ENCODE measurements at regions of chr19 and their contacts with region 1.

Region 1: DNA sequence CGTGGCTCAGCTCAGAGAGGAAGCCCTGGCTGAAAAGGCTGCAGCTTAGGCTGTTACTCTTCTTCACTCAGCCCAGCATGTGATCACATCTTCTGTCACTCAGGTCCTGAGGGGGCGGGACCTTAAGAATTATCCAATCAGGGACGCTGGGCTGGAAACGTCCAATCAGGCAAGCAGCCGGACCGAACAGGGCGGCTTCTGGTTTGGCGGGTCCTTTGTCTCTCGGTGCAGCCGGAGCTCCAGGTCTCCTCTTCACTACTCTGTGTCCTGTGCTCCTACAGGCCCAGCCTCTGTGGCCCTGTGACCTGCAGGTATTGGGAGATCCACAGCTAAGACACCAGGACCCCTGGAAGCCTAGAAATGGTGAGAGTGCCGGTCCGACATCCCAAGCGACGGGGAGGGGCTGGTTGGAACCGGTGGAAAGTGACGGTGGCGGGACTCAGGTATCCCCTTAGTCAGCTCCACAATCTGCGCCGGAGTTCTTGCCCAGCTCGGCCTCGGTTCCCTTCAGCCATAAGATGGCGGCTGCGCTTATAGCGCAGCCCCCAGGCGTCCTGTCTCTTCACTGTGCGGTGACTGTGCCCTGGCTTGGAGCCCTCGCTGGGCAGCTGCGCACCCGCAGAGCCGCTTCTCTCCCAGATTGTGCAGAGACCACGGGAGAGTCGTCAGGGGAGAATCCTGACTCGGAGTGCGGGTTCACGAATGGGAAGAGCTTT is at the start of gene ZNF93:
- DNase-seq: peak; percentile 97
- ATAC-seq: peak; percentile 98
- H3K4me3 Mint-ChIP-seq: peak within 1 kb of the TSS; percentile 88
- H3K27ac Mint-ChIP-seq: peak within 1 kb of the TSS; percentile 97
- H3K4me1 Mint-ChIP-seq: peaks cover 27% of the 10 kb centered on the region
- H3K27me3 Mint-ChIP-seq: no peaks in the 10 kb centered on the region
- total RNA-seq, gene ZNF93: 10.8 to 18.6 TPM

Region 2: DNA sequence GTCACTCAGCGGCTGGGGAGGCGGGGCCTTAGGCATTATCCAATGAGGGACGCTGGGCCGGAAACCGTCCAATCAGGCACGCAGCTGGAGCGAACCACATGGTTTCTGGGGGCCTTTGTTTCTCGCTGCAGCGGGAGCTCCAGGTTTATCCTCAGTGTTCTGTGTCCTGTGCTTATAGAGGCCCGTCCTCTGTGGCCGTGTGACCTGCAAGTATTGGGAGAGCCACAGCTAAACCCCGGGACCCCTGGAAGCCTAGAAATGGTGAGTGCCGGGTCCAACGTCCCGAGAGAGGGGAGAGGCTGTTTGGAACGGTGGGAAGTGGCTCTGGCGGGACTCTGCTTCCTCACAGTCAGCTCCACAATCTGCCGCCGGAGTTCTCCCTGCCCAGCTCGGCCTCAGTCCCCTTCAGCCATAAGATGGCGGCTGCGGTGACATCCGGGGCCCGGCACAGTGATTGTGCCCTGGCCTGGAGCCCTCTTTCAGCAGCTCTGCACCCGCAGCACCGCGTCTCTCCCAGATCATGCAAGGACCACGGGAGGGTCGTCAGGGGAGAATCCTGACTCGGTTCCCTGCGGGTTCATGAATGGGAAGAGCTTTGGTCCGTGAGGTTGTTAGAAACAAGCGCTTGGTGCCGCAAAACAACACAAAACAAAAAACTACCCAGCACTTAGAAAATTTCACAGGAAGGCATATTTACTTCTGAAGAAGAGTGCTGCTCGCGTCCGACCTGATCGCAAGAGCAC is 35.0 kb before region 1 on chr19 and contains the start of gene ZNF253:
- CTCF ChIA-PET with region 1: interaction called, 16 read pairs
- DNase-seq: peak; percentile 99
- ATAC-seq: peak; percentile 96
- H3K4me3 Mint-ChIP-seq: peak within 1 kb of the TSS; percentile 99
- H3K27ac Mint-ChIP-seq: peak within 1 kb of the TSS; percentile 100
- H3K4me1 Mint-ChIP-seq: peaks cover 22% of the 10 kb centered on the region
- H3K27me3 Mint-ChIP-seq: no peaks in the 10 kb centered on the region
- total RNA-seq, gene ZNF253: 19.9 to 20.2 TPM

Region 3: DNA sequence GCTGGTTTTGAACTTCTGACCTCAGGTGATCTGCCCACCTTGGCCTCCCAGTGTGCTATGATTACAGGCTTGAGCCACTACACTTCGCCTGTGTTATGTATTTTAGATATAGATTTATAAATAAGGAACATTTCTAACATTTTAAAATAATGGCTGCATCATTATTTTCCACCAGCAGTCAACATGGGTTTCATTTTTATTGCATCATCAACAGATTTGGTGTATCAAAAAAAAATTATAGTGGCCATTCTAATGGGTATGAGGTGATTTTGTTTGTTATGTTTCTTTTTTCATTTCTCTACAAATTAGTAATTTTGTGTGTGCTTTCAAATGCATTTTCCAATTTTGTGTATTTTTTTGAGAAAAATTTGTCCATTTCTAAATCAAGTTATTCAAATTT is 16.3 kb before region 1 on chr19:
- CTCF ChIA-PET with region 1: no interaction called
- DNase-seq: no peak
- ATAC-seq: no peak
- H3K4me3 Mint-ChIP-seq: no peak overlapping the region
- H3K27ac Mint-ChIP-seq: no peak overlapping the region
- H3K4me1 Mint-ChIP-seq: no peaks in the 10 kb centered on the region
- H3K27me3 Mint-ChIP-seq: no peaks in the 10 kb centered on the region